ENCODE measurements at regions of chr1 and their contacts with region 1.

Region 1: DNA sequence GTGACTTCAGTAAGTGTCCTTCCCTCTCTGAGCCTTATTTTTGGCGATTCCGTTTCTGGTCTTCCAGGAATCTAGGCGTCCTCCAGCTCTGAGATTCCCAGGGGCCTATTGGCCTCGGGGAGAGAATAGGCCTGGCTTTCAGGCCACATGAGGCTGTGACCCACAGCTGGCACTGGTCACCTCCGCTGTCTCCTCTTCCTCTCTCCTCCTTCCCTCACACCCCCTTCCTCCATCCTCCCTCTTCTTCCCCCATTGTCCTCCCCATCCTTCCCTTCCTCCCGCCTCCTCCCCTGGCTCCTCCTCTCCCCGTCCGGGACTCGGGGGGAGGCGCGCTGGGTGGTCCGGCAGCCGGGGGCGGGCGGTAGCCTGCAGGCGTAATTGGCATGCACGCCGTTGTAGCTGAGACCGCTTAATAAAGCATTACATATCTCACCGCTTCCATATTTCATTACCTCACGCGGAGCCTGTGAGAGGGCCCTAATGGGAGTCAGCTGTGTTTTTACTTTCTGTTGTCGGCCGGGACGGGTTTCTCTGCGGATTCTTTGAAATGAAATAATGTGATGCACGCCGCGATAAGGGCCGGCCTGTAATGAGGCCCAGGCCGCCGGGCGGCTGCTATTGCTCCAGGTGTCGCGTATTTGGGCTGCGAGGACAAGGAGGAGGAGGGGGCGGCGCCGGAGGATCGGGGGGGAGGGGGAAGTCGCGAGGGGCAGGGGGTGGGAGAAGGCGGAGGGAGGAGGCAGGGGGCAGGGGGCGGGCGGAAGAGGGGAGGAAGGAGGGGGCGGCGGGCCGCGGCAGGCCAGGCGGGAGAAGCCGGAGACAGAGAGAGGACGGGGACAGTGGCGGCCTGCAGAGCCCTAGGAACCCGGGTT is 95.3 kb downstream of the FOXD2 start:
- DNase-seq: peak; percentile 56 to 65
- ATAC-seq: peak; percentile 65 to 87 (median 82)
- H3K4me3 ChIP-seq: peak overlapping the region in 9 of 10 donors; percentile 34 to 63 (median 50)
- H3K27ac ChIP-seq: peak overlapping the region in 7 of 10 donors; percentile 0 to 62 (median 43)
- H3K4me1 ChIP-seq: peaks cover 4 to 36% (median 18%) of the 10 kb centered on the region in 9 donors
- H3K27me3 ChIP-seq: peaks cover 0 to 39% (median 1%) of the 10 kb centered on the region in 7 donors
- CTCF ChIP-seq: no peak

Region 2: GRCh38 chr1:47578026-47578720 is 45.0 kb after region 1 on chr1:
- intact Hi-C with region 1: loop called in 1 of 10 experiments (anchors 5 kb)
- DNase-seq: peak; percentile 34 to 39
- ATAC-seq: peak; percentile 66 to 86 (median 79)
- H3K4me3 ChIP-seq: no peak overlapping the region
- H3K27ac ChIP-seq: peak overlapping the region in 8 of 10 donors; percentile 3 to 70 (median 58)
- H3K4me1 ChIP-seq: peaks cover 0 to 21% (median 15%) of the 10 kb centered on the region in 9 donors
- H3K27me3 ChIP-seq: peaks cover 0 to 72% (median 5%) of the 10 kb centered on the region in 7 donors
- CTCF ChIP-seq: no peak

Region 3: DNA sequence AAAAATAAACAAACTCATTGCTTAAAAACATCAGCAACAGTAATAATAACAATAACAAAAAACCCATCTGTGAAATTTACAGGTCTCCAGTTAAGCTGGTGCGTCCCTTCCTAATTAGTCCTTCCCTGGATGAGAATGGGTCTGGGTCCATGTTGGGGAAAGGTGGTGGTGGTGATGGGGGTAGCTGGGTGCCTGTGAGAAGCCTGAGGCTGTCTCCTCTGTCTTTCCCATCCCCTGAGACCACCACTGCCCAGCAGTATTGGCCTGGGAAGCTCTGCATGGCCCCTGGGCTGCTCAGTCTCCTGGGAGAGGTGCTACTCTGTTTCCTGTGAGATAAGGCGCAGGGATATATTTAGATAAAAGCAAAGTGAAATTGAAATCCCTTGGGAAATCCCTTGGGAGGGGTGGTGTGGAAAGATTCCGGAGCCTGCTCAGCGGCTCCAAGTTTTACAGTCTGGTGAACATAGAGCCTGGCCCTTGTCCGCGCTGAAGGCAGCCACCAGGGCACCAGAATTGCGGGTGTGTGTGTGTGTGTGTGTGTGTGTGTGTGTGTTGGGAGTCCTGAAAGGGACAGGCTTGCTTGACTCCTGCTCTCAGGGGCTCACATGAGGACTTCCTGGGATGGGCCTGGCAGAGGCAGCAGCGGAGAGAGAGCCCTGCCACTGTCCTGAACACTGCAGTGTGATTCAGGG is 54.9 kb after region 1 on chr1:
- intact Hi-C with region 1: loop called in 1 of 10 experiments (anchors 5 kb)
- DNase-seq: peak; percentile 55 to 75
- ATAC-seq: peak; percentile 80 to 95 (median 89)
- H3K4me3 ChIP-seq: no peak overlapping the region
- H3K27ac ChIP-seq: peak overlapping the region in 6 of 10 donors; percentile 19 to 58 (median 32)
- H3K4me1 ChIP-seq: peaks cover 5 to 54% (median 25%) of the 10 kb centered on the region in 9 donors
- H3K27me3 ChIP-seq: peaks cover 0 to 73% (median 25%) of the 10 kb centered on the region in 7 donors
- CTCF ChIP-seq: no peak

Region 4: GRCh38 chr1:47624531-47624930 is 91.4 kb after region 1 on chr1:
- intact Hi-C with region 1: loop called in 2 of 10 experiments (anchors 5 to 10 kb)
- DNase-seq: peak in 1 of 2 donors; percentile 2
- ATAC-seq: no peak
- H3K4me3 ChIP-seq: no peak overlapping the region
- H3K27ac ChIP-seq: no peak overlapping the region
- H3K4me1 ChIP-seq: peaks cover 0 to 10% (median 0%) of the 10 kb centered on the region in 9 donors
- H3K27me3 ChIP-seq: peaks cover 0 to 16% (median 7%) of the 10 kb centered on the region in 7 donors
- CTCF ChIP-seq: peak in 5 of 9 donors; percentile 17 to 34 (median 27)

Region 5: DNA sequence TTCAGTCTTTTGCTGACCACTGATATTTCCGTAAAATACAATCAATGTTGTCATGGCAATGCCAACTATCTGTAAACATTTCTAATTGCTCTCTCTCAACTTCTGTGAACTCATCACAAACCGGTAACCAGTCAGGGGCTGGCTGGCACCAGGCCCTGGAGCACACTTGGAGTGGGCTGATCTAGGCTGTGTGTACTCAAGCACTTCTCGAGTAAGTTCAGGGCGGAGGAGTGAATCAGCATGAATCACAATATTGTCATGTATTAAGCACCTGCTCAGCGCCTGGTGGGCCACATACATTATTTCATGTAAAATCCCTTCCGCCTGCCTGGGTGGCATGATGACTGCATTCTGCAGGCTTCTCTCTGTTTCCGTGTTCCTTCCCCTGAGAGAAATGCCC is 117.0 kb after region 1 on chr1:
- intact Hi-C with region 1: no loop called
- DNase-seq: no peak
- ATAC-seq: no peak
- H3K4me3 ChIP-seq: no peak overlapping the region
- H3K27ac ChIP-seq: no peak overlapping the region
- H3K4me1 ChIP-seq: peaks cover 0 to 8% (median 0%) of the 10 kb centered on the region in 9 donors
- H3K27me3 ChIP-seq: peaks cover 0 to 33% (median 8%) of the 10 kb centered on the region in 7 donors
- CTCF ChIP-seq: no peak